Head of caudate nucleus (tissue), 42 donors: ENCODE measurements at regions of chr16 and their contacts with region 1.

Region 1: GRCh38 chr16:11356573-11357331 is 11.5 kb downstream of the RMI2 start:
- DNase-seq: peak; percentile 36 to 84 (median 60)

Region 2: GRCh38 chr16:10964039-10964890 is 392.5 kb before region 1 on chr16:
- intact Hi-C with region 1: loop called (anchors 10 kb)
- DNase-seq: peak; percentile 64 to 94 (median 87)

Region 3: DNA sequence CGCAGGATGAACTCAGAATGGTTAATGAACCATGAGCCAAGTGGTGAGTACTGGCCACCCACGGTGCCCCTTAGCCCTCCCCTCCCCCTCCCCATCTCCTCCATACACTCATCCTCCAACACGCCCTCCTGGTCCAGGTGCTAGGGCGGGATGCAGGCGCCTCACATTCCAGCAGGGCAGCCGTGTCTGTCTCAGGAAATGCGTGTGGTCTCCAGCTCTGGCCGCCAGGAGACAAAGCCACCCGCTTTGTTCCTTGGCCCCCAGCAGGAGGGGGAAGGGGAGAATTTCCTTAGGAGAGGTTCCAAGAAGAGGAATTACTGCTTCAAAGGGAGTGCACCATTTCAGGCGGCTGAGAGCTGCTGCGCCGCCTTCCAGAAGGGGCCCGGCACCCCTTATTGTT is 41.2 kb before region 1 on chr16:
- intact Hi-C with region 1: no loop called
- DNase-seq: no peak